Heart left ventricle (tissue), 16 donors: ENCODE measurements at regions of chr2 and their contacts with region 1.

Region 1: GRCh38 chr2:11863513-11864328 is 117.3 kb downstream of the LPIN1 start:
- DNase-seq: peak; percentile 85 to 91 (median 87)
- ATAC-seq: peak; percentile 83 to 96 (median 94)
- H3K4me3 ChIP-seq: peak overlapping the region in 6 of 12 donors; percentile 3 to 24 (median 15)
- H3K27ac ChIP-seq: peak overlapping the region in 11 of 12 donors; percentile 45 to 67 (median 53)
- H3K4me1 ChIP-seq: peaks cover 0 to 28% (median 12%) of the 10 kb centered on the region in 12 donors
- H3K27me3 ChIP-seq: no peaks in the 10 kb centered on the region
- CTCF ChIP-seq: peak; percentile 90 to 99 (median 96)
- POLR2A ChIP-seq: no peak

Region 2: DNA sequence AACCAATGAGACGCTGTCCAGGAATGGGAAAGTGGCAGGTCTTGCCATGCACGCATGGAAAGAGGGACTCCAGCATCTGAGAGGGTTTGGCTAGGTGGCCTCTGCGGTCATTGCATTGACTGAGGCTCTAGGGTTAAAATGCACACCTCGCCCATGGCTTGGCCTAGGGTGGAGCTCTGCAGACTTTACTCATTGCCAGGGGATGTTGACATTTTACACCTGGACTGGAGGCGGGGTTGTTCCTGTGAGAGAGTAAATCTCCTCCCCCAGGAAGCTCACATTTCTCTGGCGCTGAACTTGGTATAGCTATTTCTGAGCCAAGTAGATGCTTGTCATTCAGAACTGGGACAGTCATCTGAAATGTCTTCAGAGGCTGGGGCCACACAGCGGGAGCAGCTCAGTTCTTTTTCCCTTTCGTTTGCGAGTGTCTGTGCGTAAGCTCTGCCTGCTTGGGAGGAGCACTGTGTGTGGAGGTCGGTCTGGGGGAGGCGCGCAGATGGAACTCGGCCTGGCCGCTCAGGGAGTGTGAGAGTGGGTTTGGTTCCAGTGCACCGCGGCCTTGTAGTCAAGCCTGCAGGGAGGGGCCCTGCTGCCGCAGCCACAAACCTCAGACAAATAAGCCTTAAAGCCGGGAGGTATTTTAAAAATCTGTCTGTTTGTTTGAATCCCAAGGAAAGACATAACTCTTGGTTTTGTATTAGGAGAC is 40.8 kb before region 1 on chr2:
- intact Hi-C with region 1: no loop called
- DNase-seq: peak in 1 of 5 donors; percentile 41
- ATAC-seq: peak; percentile 30 to 42 (median 41)
- H3K4me3 ChIP-seq: no peak overlapping the region
- H3K27ac ChIP-seq: no peak overlapping the region
- H3K4me1 ChIP-seq: peaks cover 0 to 20% (median 6%) of the 10 kb centered on the region in 12 donors
- H3K27me3 ChIP-seq: no peaks in the 10 kb centered on the region
- CTCF ChIP-seq: no peak
- POLR2A ChIP-seq: no peak

Region 3: DNA sequence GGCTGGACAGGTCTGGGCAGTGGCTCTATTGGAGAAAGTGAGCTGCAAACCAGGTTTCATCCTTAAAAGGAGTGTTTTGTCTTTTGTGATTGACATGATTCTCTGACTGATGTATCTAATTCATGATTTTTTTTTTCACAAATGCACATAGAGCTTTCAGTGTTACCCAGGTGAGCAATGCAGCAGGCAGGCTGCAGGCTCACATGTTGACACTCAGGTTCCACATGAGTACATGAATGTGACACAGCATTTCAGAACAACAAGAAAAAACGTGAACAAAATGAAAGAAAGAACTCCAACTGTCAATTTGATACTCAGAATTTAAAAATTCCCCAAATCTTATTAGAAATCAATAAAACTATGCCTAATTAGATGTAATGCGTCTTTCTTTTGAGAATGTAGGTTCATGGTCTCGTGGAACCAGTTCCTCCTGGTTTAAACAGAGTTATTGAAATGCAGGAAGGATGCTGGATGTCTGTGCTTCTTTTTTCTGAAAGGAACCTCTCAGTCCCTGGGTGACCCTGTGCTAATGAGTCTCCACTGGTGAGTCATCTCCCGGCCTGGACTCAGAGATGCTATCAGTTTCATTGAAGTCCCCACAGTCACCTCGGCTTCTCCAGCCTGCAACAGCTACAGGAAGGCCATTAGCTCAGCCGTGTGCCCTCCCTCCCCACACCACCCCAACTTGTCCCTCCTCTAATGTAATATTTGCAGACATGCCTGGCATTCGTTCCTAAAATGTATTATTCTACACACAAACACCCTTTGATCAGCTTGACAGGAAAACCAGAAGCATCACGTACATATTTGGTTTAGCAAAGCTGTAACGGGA is 313.1 kb after region 1 on chr2:
- intact Hi-C with region 1: loop called in 2 of 10 experiments (anchors 10 kb)
- DNase-seq: peak; percentile 51 to 75 (median 72)
- ATAC-seq: peak; percentile 60 to 96 (median 90)
- H3K4me3 ChIP-seq: no peak overlapping the region
- H3K27ac ChIP-seq: peak overlapping the region in 7 of 12 donors; percentile 2 to 65 (median 6)
- H3K4me1 ChIP-seq: peaks cover 8 to 33% (median 22%) of the 10 kb centered on the region in 12 donors
- H3K27me3 ChIP-seq: no peaks in the 10 kb centered on the region
- CTCF ChIP-seq: no peak
- POLR2A ChIP-seq: no peak

Region 4: GRCh38 chr2:12320991-12321641 is 457.4 kb after region 1 on chr2:
- intact Hi-C with region 1: loop called in 3 of 10 experiments (anchors 5 to 10 kb)
- DNase-seq: peak in 4 of 5 donors; percentile 25 to 68 (median 48)
- ATAC-seq: peak; percentile 53 to 88 (median 81)
- H3K4me3 ChIP-seq: no peak overlapping the region
- H3K27ac ChIP-seq: peak overlapping the region in 8 of 12 donors; percentile 2 to 41 (median 28)
- H3K4me1 ChIP-seq: peaks cover 0 to 26% (median 5%) of the 10 kb centered on the region in 12 donors
- H3K27me3 ChIP-seq: no peaks in the 10 kb centered on the region
- CTCF ChIP-seq: peak in 2 of 12 donors; percentile 3 to 16
- POLR2A ChIP-seq: no peak

Region 5: GRCh38 chr2:12326449-12327190 is 462.9 kb after region 1 on chr2:
- intact Hi-C with region 1: loop called in 4 of 10 experiments (anchors 5 to 10 kb)
- DNase-seq: no peak
- ATAC-seq: peak in 3 of 4 donors; percentile 34 to 65 (median 62)
- H3K4me3 ChIP-seq: no peak overlapping the region
- H3K27ac ChIP-seq: no peak overlapping the region
- H3K4me1 ChIP-seq: peaks cover 0 to 7% (median 0%) of the 10 kb centered on the region in 12 donors
- H3K27me3 ChIP-seq: no peaks in the 10 kb centered on the region
- CTCF ChIP-seq: peak in 6 of 12 donors; percentile 10 to 27 (median 20)
- POLR2A ChIP-seq: no peak

Region 6: DNA sequence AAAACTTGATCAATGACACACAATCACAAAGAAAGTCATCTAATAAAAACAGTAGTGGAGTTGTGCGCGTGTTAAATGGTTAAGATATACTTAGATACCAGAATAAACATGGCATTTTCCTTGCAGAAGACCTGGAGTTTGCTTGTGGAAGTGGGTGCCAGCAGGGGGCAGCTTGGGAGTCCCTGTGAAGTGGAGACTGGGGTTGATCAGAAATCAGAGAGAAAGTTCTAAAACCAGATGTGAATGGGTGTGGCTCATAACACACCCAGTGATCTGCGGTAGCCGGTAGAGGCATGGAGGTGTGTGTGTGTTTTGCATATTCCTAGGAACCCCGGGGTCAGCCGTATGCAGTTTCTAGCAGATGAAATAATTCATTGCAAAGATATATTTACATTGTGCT is 552.9 kb after region 1 on chr2:
- intact Hi-C with region 1: loop called in 1 of 10 experiments (anchors 10 kb)
- DNase-seq: peak in 4 of 5 donors; percentile 33 to 68 (median 54)
- ATAC-seq: peak in 2 of 4 donors; percentile 20 to 58
- H3K4me3 ChIP-seq: no peak overlapping the region
- H3K27ac ChIP-seq: no peak overlapping the region
- H3K4me1 ChIP-seq: peaks cover 0 to 19% (median 0%) of the 10 kb centered on the region in 12 donors
- H3K27me3 ChIP-seq: no peaks in the 10 kb centered on the region
- CTCF ChIP-seq: peak; percentile 37 to 68 (median 54)
- POLR2A ChIP-seq: no peak

Region 7: GRCh38 chr2:12555012-12555645 is 691.4 kb after region 1 on chr2:
- intact Hi-C with region 1: loop called in 1 of 10 experiments (anchors 10 kb)
- DNase-seq: no peak
- ATAC-seq: peak in 2 of 4 donors; percentile 67 to 69
- H3K4me3 ChIP-seq: no peak overlapping the region
- H3K27ac ChIP-seq: peak overlapping the region in 7 of 12 donors; percentile 14 to 58 (median 28)
- H3K4me1 ChIP-seq: peaks cover 0 to 23% (median 10%) of the 10 kb centered on the region in 12 donors
- H3K27me3 ChIP-seq: no peaks in the 10 kb centered on the region
- CTCF ChIP-seq: peak in 6 of 12 donors; percentile 8 to 41 (median 19)
- POLR2A ChIP-seq: no peak